ENCODE measurements at regions of chr5 and their contacts with region 1.

Region 1: DNA sequence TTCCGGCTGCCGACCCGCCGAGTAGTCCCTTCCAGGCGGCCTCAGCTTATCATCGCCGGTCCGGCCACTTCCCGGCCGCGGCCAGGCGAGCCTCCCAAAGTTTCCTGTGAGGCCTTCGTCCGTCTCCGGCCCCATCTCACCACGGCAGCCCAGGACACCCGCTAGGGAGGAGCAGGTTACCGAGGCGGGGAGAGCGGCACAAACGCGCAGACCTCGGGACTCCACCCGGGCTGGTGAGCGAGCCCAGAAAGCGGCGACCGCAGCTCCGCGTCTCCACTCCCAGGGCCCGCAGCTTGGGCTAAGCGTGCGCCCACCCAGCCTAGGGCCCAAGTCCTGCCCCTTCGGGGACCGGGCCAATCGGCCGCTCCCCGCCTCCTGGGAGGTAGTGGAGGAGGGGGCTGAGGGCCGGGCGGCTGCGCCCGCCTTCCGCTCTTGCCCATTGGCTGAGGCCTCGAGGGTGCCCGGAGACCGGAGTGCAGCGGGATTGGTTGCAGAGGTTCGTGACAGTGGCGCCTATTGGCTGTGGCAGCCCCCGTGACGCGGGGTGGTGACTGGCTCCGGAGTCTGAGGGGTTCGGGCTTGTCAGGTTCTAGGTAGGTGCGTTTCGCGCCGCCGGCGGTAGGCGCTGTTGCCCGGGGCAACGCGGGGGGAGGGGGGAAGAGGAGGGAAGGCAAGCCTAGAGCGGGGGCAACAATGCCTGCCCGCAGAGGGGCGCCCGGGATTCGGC is 867 bp downstream of the FER start:
- DNase-seq: peak; percentile 96
- H3K4me3 ChIP-seq: peak overlapping the region; percentile 81
- H3K27ac ChIP-seq: no peak overlapping the region
- H3K4me1 ChIP-seq: peaks cover 6% of the 10 kb centered on the region
- CTCF ChIP-seq: peak; percentile 56

Region 2: DNA sequence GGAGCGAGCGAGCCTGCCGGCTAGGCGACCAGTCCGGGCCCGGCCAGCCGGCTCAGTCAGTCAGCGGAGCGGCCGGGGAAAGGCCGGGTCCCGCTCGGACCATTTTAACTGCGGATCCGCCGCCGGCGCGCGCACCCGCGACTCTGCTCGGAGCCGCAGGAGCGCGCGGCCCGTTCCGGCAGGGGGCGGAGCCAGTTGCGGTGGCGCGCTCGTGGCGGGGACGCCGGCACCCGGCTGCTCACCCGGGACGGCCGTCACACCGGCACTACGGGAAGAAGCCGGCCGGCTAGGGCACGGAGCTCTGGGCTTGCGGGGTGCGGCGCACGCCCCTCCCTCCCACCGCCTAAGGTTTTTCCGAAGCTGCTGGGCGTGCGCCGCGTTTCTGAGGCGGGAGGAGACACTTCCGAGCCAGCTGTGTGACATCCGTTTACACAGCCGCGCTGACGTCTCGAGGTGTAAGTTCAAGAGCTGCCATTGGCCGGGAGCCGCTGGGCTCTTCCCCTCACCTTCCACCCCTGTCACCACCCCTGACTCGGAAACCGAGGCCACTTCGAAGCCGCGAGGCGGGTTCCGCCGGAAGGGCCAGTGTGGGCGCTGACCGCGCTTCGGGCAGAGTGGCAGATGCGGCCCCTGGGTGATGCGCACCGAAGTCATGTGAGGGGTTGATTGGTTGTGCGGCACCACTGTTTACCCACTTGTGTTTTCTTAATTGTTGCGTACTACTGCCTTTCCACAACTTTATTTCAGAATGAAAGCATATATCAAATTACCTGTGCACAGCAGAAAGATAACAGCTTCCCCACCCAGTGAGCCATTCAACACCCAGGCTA is 366.4 kb before region 1 on chr5 and contains the start of gene FBXL17:
- CTCF ChIA-PET with region 1: no interaction called
- POLR2A ChIA-PET with region 1: no interaction called
- intact Hi-C with region 1: loop called (anchors 10 kb)
- DNase-seq: peak; percentile 96
- H3K4me3 ChIP-seq: peak within 1 kb of the TSS; percentile 92
- H3K27ac ChIP-seq: peak within 1 kb of the TSS; percentile 92
- H3K4me1 ChIP-seq: peaks cover 28% of the 10 kb centered on the region
- CTCF ChIP-seq: no peak
- total RNA-seq, gene FBXL17: 10.2 TPM in 2 replicates

Region 3: GRCh38 chr5:108472237-108472636 is 276.3 kb before region 1 on chr5:
- CTCF ChIA-PET with region 1: no interaction called
- POLR2A ChIA-PET with region 1: no interaction called
- intact Hi-C with region 1: no loop called
- DNase-seq: no peak
- H3K4me3 ChIP-seq: no peak overlapping the region
- H3K27ac ChIP-seq: no peak overlapping the region
- H3K4me1 ChIP-seq: no peaks in the 10 kb centered on the region
- CTCF ChIP-seq: no peak

Measured in OCI-LY7 (cell line).